ENCODE measurements at regions of chr15 and their contacts with region 1.

Region 1: GRCh38 chr15:68304589-68305337 is 27.2 kb downstream of the FEM1B start:
- DNase-seq: no peak
- ATAC-seq: no peak
- H3K4me3 ChIP-seq: no peak overlapping the region
- H3K27ac ChIP-seq: no peak overlapping the region
- H3K4me1 ChIP-seq: peaks cover 11% of the 10 kb centered on the region
- H3K27me3 ChIP-seq: no peaks in the 10 kb centered on the region
- CTCF ChIP-seq: no peak
- EP300 ChIP-seq: no peak
- POLR2A ChIP-seq: no peak
- RAD21 ChIP-seq: no peak

Region 2: DNA sequence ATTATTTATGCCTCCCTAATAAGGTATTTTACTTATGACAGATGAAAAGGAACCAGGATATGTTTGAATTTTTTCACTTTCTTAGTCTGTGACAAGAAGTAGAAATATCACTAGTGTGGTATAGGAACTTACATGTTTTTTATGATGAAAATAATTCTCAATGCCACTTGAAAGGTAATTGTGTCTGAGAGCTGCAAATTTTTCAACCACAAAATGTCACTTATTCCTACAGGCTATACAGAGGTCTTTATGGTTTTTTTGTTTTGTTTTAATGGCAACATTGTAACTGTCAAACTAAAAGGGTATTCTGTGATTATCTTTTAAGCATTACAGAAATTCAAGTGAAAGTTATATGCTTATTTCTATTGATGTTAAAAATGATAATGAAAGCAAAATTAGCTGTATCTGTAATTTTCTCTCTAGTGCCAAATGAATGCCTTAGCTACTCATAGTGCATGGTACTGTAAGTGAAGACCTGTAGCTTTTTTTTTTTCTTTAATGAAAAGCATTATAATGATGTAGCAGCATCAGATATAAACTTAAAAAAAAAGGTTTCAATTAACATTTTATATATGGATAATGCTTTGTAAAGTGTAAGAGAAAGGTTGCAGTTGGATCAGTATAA is 12.5 kb before region 1 on chr15:
- CTCF ChIA-PET with region 1: interaction called, 30 read pairs
- POLR2A ChIA-PET with region 1: no interaction called
- RAD21 ChIA-PET with region 1: interaction called, 3 read pairs
- SMC1A ChIA-PET with region 1: interaction called, 8 read pairs
- in situ Hi-C with region 1: no loop called
- intact Hi-C with region 1: no loop called
- DNase-seq: no peak
- ATAC-seq: peak; percentile 34; the same call in 2 of the 3 replicates
- H3K4me3 ChIP-seq: no peak overlapping the region
- H3K27ac ChIP-seq: no peak overlapping the region
- H3K4me1 ChIP-seq: no peaks in the 10 kb centered on the region
- H3K27me3 ChIP-seq: no peaks in the 10 kb centered on the region
- CTCF ChIP-seq: no peak
- EP300 ChIP-seq: no peak
- POLR2A ChIP-seq: no peak
- RAD21 ChIP-seq: no peak

Region 3: DNA sequence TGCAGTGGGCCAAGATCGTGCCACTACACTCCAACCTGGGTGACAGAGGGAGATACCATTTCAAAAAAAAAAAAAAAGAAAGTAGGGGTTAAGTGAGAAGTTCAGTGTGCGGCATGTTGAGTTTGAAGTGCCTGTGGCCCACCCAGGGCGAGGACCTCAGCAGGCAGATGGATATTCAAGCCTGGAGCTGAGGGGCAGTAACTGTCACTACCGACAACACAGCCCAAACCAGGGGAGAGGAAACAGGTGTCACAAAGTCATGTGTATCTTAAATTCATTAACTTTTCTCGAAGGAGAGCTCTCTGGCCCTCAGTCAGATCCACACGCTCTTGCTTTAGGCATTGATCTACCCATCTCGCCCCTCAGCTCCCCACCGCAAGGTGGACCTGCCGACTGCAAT is 18.0 kb after region 1 on chr15:
- CTCF ChIA-PET with region 1: no interaction called
- POLR2A ChIA-PET with region 1: no interaction called
- RAD21 ChIA-PET with region 1: no interaction called
- SMC1A ChIA-PET with region 1: no interaction called
- in situ Hi-C with region 1: no loop called
- intact Hi-C with region 1: no loop called
- DNase-seq: no peak
- ATAC-seq: no peak
- H3K4me3 ChIP-seq: no peak overlapping the region
- H3K27ac ChIP-seq: no peak overlapping the region
- H3K4me1 ChIP-seq: no peaks in the 10 kb centered on the region
- H3K27me3 ChIP-seq: no peaks in the 10 kb centered on the region; a peak in 2 of 4 replicates
- CTCF ChIP-seq: no peak
- EP300 ChIP-seq: no peak
- POLR2A ChIP-seq: no peak
- RAD21 ChIP-seq: no peak

Region 4: GRCh38 chr15:68383161-68384074 is 78.7 kb after region 1 on chr15:
- CTCF ChIA-PET with region 1: interaction called, 10 read pairs
- POLR2A ChIA-PET with region 1: no interaction called
- RAD21 ChIA-PET with region 1: no interaction called
- SMC1A ChIA-PET with region 1: interaction called, 3 read pairs
- in situ Hi-C with region 1: no loop called
- intact Hi-C with region 1: loop called (anchors 1 kb)
- DNase-seq: no peak
- ATAC-seq: peak; percentile 79
- H3K4me3 ChIP-seq: no peak overlapping the region
- H3K27ac ChIP-seq: no peak overlapping the region
- H3K4me1 ChIP-seq: no peaks in the 10 kb centered on the region
- H3K27me3 ChIP-seq: no peaks in the 10 kb centered on the region; a peak in 2 of 4 replicates
- CTCF ChIP-seq: peak; percentile 54 to 69 (median 59)
- EP300 ChIP-seq: no peak
- POLR2A ChIP-seq: no peak
- RAD21 ChIP-seq: peak; percentile 60

Region 5: DNA sequence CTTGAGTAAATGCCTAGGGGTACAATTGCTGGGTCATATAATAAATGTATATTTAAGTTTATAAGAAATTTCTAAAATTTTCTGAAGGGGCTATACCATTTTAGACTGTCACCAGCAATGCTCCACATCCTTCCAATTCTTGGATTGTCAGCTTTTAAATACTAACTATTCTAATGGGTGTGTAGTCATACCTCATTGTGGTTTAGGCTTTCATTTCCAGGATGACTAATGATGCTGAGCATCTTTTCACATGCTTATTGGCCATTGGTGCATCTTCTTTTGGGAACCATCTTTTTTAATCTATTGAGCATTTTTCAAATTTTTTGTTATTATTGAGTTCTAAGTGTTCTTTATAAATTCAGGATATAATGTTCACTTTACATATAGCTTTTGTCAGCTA is 221.5 kb after region 1 on chr15:
- CTCF ChIA-PET with region 1: no interaction called
- POLR2A ChIA-PET with region 1: no interaction called
- RAD21 ChIA-PET with region 1: no interaction called
- SMC1A ChIA-PET with region 1: no interaction called
- in situ Hi-C with region 1: no loop called
- intact Hi-C with region 1: no loop called
- DNase-seq: no peak
- ATAC-seq: peak; percentile 85
- H3K4me3 ChIP-seq: no peak overlapping the region
- H3K27ac ChIP-seq: no peak overlapping the region
- H3K4me1 ChIP-seq: peaks cover 10% of the 10 kb centered on the region; the same call in 1 of the 2 replicates
- H3K27me3 ChIP-seq: no peaks in the 10 kb centered on the region
- CTCF ChIP-seq: no peak
- EP300 ChIP-seq: no peak
- POLR2A ChIP-seq: no peak
- RAD21 ChIP-seq: no peak

Region 6: DNA sequence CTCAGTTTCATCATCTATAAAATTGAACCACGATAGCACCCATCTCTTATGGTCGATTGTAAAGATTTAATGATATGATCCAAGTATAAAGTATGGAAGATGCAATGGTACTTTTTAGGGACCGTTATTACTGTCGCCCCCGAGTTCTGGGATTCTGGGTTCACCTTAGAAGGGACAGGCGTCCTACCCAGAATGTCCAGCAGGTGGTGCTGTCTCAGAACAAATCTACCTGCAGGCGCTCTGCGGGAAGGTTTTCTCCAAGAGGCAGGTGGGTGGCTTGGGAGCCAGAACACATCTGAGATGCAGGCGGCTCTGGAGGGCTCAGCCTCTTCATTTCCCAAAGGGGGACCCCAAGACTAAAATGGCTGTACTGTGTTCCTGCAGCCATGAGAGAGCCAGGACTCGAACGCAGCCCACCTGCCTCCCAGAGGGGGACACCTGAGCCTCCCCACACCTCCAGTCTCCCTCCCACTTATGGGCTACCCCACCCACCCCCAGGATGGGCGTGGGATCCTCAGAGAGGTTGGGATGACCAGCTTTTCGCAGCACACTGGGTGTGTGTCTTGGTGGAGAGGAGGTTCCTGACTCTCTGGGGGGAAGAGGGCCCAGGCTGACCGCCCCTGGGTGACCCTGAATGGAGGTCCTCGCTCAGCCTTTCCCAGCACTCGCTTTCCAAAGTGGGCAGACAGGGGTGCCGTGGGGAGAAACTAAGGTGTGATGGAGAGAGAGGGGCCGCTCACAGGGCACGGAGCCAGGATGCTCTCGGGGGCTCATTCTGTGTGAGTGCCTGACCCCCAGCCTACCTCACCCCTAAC is 245.9 kb after region 1 on chr15:
- CTCF ChIA-PET with region 1: interaction called, 10 read pairs
- POLR2A ChIA-PET with region 1: no interaction called
- RAD21 ChIA-PET with region 1: interaction called, 3 read pairs
- SMC1A ChIA-PET with region 1: no interaction called
- in situ Hi-C with region 1: no loop called
- intact Hi-C with region 1: loop called (anchors 5 kb)
- DNase-seq: no peak
- ATAC-seq: peak; percentile 59
- H3K4me3 ChIP-seq: no peak overlapping the region
- H3K27ac ChIP-seq: no peak overlapping the region
- H3K4me1 ChIP-seq: no peaks in the 10 kb centered on the region
- H3K27me3 ChIP-seq: no peaks in the 10 kb centered on the region
- CTCF ChIP-seq: peak; percentile 83 to 88 (median 88)
- EP300 ChIP-seq: no peak
- POLR2A ChIP-seq: no peak
- RAD21 ChIP-seq: peak; percentile 68

Measured in GM12878 (cell line).